Mammary epithelial cell (primary cell): ENCODE measurements at regions of chr16 and their contacts with region 1.

Region 1: GRCh38 chr16:8567750-8568617 is 22.3 kb downstream of the TMEM114 start:
- DNase-seq: peak; percentile 79
- H3K4me3 ChIP-seq: no peak overlapping the region
- H3K27ac ChIP-seq: no peak overlapping the region
- H3K4me1 ChIP-seq: no peaks in the 10 kb centered on the region
- H3K27me3 ChIP-seq: no peaks in the 10 kb centered on the region
- CTCF ChIP-seq: peak; percentile 97 to 99

Region 2: DNA sequence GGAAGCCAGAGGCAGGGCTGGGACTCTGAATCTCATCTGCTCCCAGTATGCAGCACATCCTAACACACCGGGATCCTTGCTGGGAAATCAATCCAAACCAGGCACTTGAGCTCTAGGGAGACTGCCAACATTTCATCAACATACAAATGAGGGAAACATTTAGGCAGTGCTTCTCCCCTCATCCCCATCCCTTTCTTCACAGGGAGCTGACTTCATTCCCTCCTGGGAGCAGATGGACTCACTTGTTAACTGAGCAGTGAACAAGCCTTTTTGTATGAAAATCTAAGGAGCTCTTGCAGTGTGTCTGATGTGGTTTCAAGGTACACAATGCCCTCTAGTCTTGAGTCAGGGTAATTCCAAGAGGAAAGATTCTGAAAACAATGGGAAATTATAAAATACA is 74.0 kb before region 1 on chr16:
- CTCF ChIA-PET with region 1: no interaction called
- dilution Hi-C with region 1: no loop called
- in situ Hi-C with region 1: no loop called
- intact Hi-C with region 1: no loop called
- DNase-seq: no peak
- H3K4me3 ChIP-seq: no peak overlapping the region
- H3K27ac ChIP-seq: no peak overlapping the region
- H3K4me1 ChIP-seq: no peaks in the 10 kb centered on the region
- H3K27me3 ChIP-seq: no peaks in the 10 kb centered on the region
- CTCF ChIP-seq: no peak

Region 3: GRCh38 chr16:8607214-8607613 is 39.2 kb after region 1 on chr16:
- CTCF ChIA-PET with region 1: no interaction called
- dilution Hi-C with region 1: loop called (anchors 5 kb)
- in situ Hi-C with region 1: no loop called
- intact Hi-C with region 1: no loop called
- DNase-seq: no peak
- H3K4me3 ChIP-seq: no peak overlapping the region
- H3K27ac ChIP-seq: no peak overlapping the region
- H3K4me1 ChIP-seq: no peaks in the 10 kb centered on the region
- H3K27me3 ChIP-seq: no peaks in the 10 kb centered on the region
- CTCF ChIP-seq: no peak

Region 4: GRCh38 chr16:8655184-8655717 is 87.3 kb after region 1 on chr16:
- CTCF ChIA-PET with region 1: no interaction called
- dilution Hi-C with region 1: no loop called
- in situ Hi-C with region 1: loop called (anchors 5 to 10 kb)
- intact Hi-C with region 1: loop called (anchors 1 kb)
- DNase-seq: peak; percentile 42
- H3K4me3 ChIP-seq: no peak overlapping the region
- H3K27ac ChIP-seq: no peak overlapping the region
- H3K4me1 ChIP-seq: no peaks in the 10 kb centered on the region
- H3K27me3 ChIP-seq: no peaks in the 10 kb centered on the region
- CTCF ChIP-seq: peak; percentile 36 to 49

Region 5: GRCh38 chr16:8878521-8878911 is 310.5 kb after region 1 on chr16:
- CTCF ChIA-PET with region 1: no interaction called
- dilution Hi-C with region 1: no loop called
- in situ Hi-C with region 1: loop called (anchors 5 to 25 kb)
- intact Hi-C with region 1: loop called (anchors 1 kb)
- DNase-seq: peak; percentile 72
- H3K4me3 ChIP-seq: no peak overlapping the region
- H3K27ac ChIP-seq: peak overlapping the region; percentile 34
- H3K4me1 ChIP-seq: peaks cover 15% of the 10 kb centered on the region
- H3K27me3 ChIP-seq: no peaks in the 10 kb centered on the region
- CTCF ChIP-seq: no peak